Activated CD8-positive, alpha-beta memory T cell treated with anti-CD3 and anti-CD28 coated beads, Interleukin-2, amount 10 ng/mL, durations not matched to agents 7 days and 5 days (primary cell): ENCODE measurements at regions of chr16 and their contacts with region 1.

Region 1: GRCh38 chr16:57609541-57610401 is 18.7 kb upstream of the ADGRG1 start:
- DNase-seq: peak; percentile 95
- ATAC-seq: peak; percentile 94
- H3K4me3 Mint-ChIP-seq: peak overlapping the region; percentile 67
- H3K27ac Mint-ChIP-seq: peak overlapping the region; percentile 97
- H3K4me1 Mint-ChIP-seq: peaks cover 82% of the 10 kb centered on the region
- H3K27me3 Mint-ChIP-seq: no peaks in the 10 kb centered on the region

Region 2: DNA sequence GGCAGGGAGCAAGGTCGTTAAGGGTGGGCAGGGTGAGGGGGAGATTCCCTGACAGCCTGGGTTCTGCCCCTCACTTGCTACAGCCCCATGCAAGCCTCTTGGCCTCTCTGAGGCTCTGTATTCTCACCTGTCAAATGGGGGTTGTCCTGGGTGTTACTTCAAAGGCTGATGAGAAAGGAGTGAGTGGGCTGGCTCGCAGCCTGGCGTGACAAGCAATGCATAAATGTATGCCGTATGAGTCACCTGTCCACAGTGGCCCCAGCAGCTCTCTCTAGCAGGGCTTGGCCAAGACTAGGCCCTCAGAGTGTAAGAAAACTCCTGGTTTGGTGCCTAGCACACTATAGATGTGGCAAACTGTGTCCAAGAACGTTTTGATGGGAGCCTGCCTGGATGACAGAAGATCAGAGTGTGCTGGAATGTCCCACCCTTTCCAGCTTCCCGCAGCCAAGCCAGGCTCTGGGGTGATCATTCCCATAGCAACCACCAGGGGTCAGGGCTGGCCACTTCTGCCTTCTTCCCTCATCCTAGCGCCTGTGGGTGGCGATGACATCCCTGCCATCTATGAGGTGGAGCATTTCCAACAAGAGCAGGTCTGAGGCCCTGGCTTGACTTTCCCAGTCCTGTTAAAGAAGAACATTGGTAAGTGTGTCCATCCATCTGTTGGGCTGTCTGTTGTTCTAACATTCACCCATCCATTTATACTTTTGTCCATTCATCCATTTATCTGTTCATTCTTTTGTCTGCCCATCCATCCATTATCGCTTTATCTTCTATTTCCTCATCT is 18.5 kb before region 1 on chr16:
- CTCF ChIA-PET with region 1: interaction called, 230 read pairs
- DNase-seq: peak; percentile 90
- ATAC-seq: peak; percentile 78
- H3K4me3 Mint-ChIP-seq: peak overlapping the region; percentile 68
- H3K27ac Mint-ChIP-seq: peak overlapping the region; percentile 91
- H3K4me1 Mint-ChIP-seq: peaks cover 67% of the 10 kb centered on the region
- H3K27me3 Mint-ChIP-seq: no peaks in the 10 kb centered on the region

Region 3: DNA sequence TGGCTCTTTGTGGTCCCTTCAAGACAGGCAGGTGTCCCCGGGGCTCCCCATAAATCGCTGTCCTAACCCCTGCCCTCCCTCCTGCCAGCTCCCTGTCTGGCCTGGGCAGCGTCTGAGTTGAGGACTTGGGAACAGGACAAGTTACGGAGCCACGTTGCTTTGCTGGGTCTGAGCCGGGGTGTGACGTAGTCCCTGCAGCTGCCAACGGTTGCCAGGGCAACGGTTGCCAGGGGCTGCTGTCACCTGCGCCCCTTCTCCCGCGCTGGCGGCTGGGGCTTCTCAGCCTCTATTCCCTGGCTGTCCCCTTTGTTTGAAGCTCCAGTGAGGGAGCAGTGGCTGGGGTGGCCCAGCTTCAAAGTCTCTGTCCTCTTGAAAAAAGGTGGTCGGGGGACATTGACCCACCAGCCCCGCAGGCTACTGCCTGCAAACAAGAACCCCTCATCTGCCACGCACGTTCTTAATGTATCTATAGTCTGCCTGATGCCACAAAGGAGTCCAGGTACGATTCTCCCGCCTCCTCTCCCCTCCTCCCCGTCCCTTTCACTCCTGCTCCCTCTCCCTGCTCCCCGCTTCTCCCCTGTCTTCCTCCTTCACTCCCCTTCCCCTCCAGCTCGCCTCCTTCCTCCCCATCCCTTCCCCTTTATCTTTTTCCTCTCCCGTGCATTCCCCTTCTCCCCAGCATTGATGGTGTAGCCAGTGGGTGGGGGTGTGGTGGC is 29.6 kb after region 1 on chr16:
- CTCF ChIA-PET with region 1: interaction called, 18 read pairs
- DNase-seq: no peak
- ATAC-seq: no peak
- H3K4me3 Mint-ChIP-seq: no peak overlapping the region
- H3K27ac Mint-ChIP-seq: no peak overlapping the region
- H3K4me1 Mint-ChIP-seq: no peaks in the 10 kb centered on the region
- H3K27me3 Mint-ChIP-seq: peaks cover 14% of the 10 kb centered on the region